GM10248 (cell line): ENCODE measurements at regions of chr3 and their contacts with region 1.

Region 1: GRCh38 chr3:107927361-107928083 is 163.3 kb downstream of the CD47 start:
- DNase-seq: peak; percentile 86
- CTCF ChIP-seq: peak; percentile 93

Region 2: DNA sequence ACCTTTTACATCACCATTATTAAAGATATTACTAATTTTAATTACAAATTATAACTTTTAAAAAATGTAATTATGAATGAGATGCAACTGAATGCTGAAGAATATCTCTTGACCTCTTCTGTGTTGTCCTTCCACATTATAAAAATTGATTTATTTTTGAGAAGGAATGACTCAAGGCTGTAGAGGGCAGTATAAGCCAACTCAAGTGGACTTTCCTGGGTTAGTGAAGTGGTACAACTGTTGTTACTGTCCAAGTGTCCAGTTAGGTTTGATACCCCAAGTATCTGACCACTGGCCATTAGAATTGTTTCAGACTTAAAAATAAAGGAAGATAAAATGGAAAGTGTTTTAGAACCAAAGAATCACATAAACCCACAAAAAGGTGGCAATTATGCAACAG is 352.9 kb before region 1 on chr3:
- CTCF ChIA-PET with region 1: interaction called, 19 read pairs
- POLR2A ChIA-PET with region 1: no interaction called
- DNase-seq: peak; percentile 22
- CTCF ChIP-seq: peak; percentile 61

Region 3: GRCh38 chr3:107676469-107677309 is 250.8 kb before region 1 on chr3:
- CTCF ChIA-PET with region 1: interaction called, 17 read pairs
- POLR2A ChIA-PET with region 1: no interaction called
- DNase-seq: no peak
- CTCF ChIP-seq: peak; percentile 24

Region 4: GRCh38 chr3:107910713-107911259 is 16.7 kb before region 1 on chr3:
- CTCF ChIA-PET with region 1: interaction called, 21 read pairs
- POLR2A ChIA-PET with region 1: no interaction called
- DNase-seq: peak; percentile 60
- CTCF ChIP-seq: no peak

Region 5: GRCh38 chr3:107938143-107938542 is 10.6 kb after region 1 on chr3:
- CTCF ChIA-PET with region 1: interaction called, 19 read pairs
- POLR2A ChIA-PET with region 1: no interaction called
- DNase-seq: no peak
- CTCF ChIP-seq: peak; percentile 40

Region 6: DNA sequence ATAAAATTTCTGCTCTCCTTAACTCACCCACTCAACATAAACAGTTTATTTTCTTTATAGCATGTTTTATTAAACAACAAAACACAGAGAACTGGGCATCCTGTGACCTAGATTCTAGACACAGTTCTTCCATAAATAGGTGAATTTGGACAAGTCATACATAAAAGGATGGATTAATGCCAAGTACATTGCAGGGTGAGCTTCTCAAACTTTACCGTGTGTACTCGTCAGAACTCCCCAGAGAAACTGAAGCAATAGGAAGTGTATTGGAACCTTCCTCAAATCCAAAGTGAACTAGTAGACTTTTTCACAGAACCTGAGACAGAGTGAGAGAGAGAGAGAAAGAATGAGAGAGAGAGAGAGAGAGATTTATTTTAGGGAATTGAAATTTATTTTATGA is 23.6 kb after region 1 on chr3:
- CTCF ChIA-PET with region 1: interaction called, 14 read pairs
- POLR2A ChIA-PET with region 1: no interaction called
- DNase-seq: no peak
- CTCF ChIP-seq: no peak